Transverse colon (tissue), 4 donors: ENCODE measurements at regions of chr9 and their contacts with region 1.

Region 1: DNA sequence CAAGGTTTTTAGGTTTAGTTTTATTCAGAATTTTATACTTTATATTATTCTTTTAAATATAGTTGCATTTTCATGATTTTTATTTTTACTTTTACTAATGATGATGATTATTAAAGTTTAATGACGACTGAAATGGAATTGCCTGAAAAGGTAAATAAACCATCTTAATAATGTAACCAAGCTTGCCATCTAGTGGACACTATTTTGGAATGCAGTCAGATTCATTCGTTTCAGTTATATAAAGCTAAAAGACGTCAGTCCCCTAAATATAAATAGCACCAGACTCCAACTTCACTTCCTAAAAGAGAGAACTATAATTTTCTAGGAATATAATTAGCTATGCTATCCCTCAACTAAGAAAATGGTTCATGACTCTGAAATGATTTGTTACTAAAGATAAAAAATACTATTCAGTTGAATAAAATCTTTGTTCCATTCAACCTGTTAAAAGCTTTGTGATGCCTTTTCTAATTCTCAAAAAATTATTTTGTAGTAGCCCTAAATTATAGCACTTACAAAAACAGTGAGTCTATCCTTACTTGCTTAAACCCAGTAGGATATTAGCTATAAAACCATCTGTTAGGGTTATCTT is 19.9 kb downstream of the ABITRAM start:
- DNase-seq: no peak
- H3K4me3 ChIP-seq: no peak overlapping the region
- H3K27ac ChIP-seq: peak overlapping the region in 1 of 4 donors; percentile 1
- H3K4me1 ChIP-seq: peaks cover 0 to 6% (median 1%) of the 10 kb centered on the region in 4 donors
- H3K27me3 ChIP-seq: no peaks in the 10 kb centered on the region
- CTCF ChIP-seq: peak; percentile 54 to 67 (median 63)
- EP300 ChIP-seq: no peak
- POLR2A ChIP-seq: no peak

Region 2: GRCh38 chr9:108850293-108850897 is 103.7 kb before region 1 on chr9:
- in situ Hi-C with region 1: loop called in 1 of 4 experiments (anchors 25 kb)
- intact Hi-C with region 1: no loop called
- DNase-seq: no peak
- H3K4me3 ChIP-seq: no peak overlapping the region
- H3K27ac ChIP-seq: no peak overlapping the region
- H3K4me1 ChIP-seq: no peaks in the 10 kb centered on the region
- H3K27me3 ChIP-seq: no peaks in the 10 kb centered on the region
- CTCF ChIP-seq: peak in 2 of 5 experiments; percentile 12 to 21
- EP300 ChIP-seq: no peak
- POLR2A ChIP-seq: no peak